Activated CD8-positive, alpha-beta memory T cell treated with anti-CD3 and anti-CD28 coated beads, Interleukin-2, amount 10 ng/mL, durations not matched to agents 7 days and 5 days (primary cell): ENCODE measurements at regions of chr14 and their contacts with region 1.

Region 1: DNA sequence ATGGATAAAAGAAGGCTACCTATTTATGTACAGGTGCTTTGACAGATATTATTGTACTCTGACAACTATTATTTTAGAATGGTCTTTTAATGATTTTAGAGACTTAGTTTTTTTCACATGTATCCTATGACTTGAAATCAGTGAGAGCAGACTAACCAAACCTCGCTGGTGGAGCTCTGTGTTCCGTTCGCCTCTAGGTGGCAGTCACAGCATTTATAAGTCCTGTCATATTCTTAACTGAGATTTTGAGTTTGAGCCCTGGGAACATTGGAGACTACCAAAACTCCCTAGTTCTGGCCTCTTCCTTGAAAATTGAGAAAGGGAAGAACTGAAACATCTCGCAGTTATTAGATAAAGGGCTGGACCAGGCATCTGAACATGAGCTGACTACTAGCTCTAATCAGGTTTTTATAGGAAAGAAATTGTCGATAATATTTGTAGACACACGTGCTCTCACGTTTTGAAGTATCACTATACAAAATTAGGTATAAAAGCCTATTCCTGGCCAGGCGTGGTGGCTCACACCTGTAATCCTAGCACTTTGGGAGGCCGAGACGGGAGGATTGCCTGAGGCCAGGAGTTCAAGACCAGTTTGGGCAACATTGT is 48.3 kb downstream of the TTLL5 start:
- DNase-seq: peak; percentile 73
- ATAC-seq: peak; percentile 78
- H3K4me3 Mint-ChIP-seq: no peak overlapping the region
- H3K27ac Mint-ChIP-seq: no peak overlapping the region
- H3K4me1 Mint-ChIP-seq: no peaks in the 10 kb centered on the region
- H3K27me3 Mint-ChIP-seq: no peaks in the 10 kb centered on the region

Region 2: DNA sequence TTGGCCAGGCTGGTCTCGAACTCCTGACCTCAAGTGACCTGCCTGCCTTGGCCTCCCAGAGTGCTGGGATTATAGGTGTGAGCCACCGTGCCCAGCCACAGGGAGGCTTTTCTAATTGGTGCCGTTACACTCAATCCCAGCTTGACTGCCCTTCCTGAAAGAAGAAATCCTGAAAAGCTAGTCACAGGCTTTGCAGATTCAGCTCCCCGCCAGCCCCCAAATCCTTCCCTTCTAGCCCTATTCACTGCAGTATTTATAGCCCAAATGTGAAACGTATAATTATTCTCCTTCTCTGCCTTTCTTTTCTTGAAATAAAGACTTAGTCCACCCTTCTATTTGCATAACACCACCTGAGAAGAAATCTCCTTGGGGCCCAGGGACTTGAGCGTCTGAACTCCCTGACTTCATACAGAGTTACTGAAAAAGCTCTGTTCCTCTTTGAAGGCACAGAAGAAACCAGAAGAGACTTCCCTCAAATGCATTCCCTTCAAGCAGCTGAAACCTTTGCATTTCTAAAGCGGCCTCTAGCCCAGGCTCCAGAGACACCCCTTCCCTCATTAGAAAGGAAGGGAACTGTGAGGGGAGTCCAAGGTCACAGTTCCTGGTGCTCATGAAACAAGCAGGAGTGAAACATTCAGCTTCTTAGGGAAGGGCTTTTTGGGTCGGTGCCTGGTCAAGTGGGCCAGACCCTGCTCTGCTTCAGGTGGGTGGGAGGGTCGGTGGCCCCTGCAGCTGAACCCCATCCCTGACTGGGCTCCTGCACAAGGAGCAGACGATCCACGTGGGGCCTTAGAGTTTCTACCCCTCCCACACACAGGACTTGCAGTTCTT is 229.3 kb before region 1 on chr14:
- CTCF ChIA-PET with region 1: no interaction called
- DNase-seq: no peak
- ATAC-seq: no peak
- H3K4me3 Mint-ChIP-seq: no peak overlapping the region
- H3K27ac Mint-ChIP-seq: no peak overlapping the region
- H3K4me1 Mint-ChIP-seq: no peaks in the 10 kb centered on the region
- H3K27me3 Mint-ChIP-seq: peaks cover 23% of the 10 kb centered on the region

Region 3: GRCh38 chr14:75697386-75697785 is 11.9 kb before region 1 on chr14:
- CTCF ChIA-PET with region 1: interaction called, 14 read pairs
- DNase-seq: no peak
- ATAC-seq: no peak
- H3K4me3 Mint-ChIP-seq: no peak overlapping the region
- H3K27ac Mint-ChIP-seq: no peak overlapping the region
- H3K4me1 Mint-ChIP-seq: no peaks in the 10 kb centered on the region
- H3K27me3 Mint-ChIP-seq: no peaks in the 10 kb centered on the region

Region 4: DNA sequence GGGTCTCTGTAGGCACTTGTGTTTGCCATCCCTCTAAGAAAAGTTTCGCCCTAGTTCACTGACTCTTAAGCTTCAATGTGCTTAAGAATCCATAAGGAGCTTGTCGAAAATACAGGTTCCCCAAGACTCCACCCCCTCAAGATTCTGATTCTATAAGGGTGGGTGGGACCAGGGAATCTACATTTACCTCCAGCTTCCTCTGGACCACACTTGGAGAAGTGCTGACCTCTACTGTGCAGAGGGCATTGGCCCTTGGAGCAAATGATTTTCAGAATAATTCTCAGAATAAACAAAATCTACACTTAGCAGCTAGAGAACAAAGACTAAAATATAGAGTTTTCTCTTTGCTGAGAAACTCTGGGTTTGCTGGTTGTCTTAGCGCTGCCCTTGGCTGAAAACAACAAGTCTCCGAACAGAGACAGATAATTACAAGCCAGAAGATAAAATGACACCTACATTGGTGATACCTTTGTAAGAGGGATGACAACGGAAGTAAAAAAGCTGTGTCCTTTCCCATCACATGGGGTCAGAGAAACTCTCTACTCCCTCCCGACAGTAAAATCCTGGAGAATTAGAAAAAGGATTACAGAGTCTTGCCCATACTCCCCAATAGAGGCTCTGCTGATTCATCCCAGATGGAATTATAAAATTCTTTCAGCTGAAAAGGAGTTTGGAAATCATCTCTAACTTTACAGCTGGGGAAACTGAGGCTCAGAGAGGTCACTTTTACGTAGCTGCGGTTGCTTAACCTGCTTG is 267.7 kb after region 1 on chr14:
- CTCF ChIA-PET with region 1: interaction called, 187 read pairs
- DNase-seq: no peak
- ATAC-seq: no peak
- H3K4me3 Mint-ChIP-seq: no peak overlapping the region
- H3K27ac Mint-ChIP-seq: no peak overlapping the region
- H3K4me1 Mint-ChIP-seq: peaks cover 27% of the 10 kb centered on the region
- H3K27me3 Mint-ChIP-seq: no peaks in the 10 kb centered on the region